Breast epithelium (tissue), 4 donors: ENCODE measurements at regions of chr3 and their contacts with region 1.

Region 1: GRCh38 chr3:139006051-139006716 is at the start of gene PRR23A:
- DNase-seq: no peak
- H3K4me3 ChIP-seq: no peak within 1 kb of the TSS
- H3K27ac ChIP-seq: no peak within 1 kb of the TSS
- H3K4me1 ChIP-seq: no peaks in the 10 kb centered on the region
- H3K27me3 ChIP-seq: no peaks in the 10 kb centered on the region
- CTCF ChIP-seq: no peak
- POLR2A ChIP-seq: no peak
- total RNA-seq, gene PRR23A: not detected

Region 2: DNA sequence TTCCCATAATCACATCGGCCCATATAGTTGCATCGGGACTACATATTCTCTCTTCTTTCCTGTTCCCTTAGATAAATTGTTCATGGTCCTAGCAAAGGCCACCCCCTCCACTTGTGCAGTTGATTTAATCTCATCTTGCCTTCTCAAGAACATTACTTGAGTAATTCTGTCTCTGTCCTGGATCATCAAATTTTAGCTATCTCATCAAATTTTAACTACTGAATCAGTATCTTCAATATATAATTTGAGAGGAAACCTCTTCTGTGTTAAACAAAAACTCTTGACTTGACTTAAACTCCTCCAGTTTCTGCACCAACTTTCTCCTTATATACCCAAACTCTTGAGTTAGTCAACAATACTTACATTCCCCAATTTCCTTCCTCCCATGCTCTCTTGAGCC is 18.8 kb after region 1 on chr3:
- intact Hi-C with region 1: loop called (anchors 1 kb)
- DNase-seq: no peak
- H3K4me3 ChIP-seq: no peak overlapping the region
- H3K27ac ChIP-seq: no peak overlapping the region
- H3K4me1 ChIP-seq: no peaks in the 10 kb centered on the region
- H3K27me3 ChIP-seq: no peaks in the 10 kb centered on the region
- CTCF ChIP-seq: no peak
- POLR2A ChIP-seq: no peak

Region 3: DNA sequence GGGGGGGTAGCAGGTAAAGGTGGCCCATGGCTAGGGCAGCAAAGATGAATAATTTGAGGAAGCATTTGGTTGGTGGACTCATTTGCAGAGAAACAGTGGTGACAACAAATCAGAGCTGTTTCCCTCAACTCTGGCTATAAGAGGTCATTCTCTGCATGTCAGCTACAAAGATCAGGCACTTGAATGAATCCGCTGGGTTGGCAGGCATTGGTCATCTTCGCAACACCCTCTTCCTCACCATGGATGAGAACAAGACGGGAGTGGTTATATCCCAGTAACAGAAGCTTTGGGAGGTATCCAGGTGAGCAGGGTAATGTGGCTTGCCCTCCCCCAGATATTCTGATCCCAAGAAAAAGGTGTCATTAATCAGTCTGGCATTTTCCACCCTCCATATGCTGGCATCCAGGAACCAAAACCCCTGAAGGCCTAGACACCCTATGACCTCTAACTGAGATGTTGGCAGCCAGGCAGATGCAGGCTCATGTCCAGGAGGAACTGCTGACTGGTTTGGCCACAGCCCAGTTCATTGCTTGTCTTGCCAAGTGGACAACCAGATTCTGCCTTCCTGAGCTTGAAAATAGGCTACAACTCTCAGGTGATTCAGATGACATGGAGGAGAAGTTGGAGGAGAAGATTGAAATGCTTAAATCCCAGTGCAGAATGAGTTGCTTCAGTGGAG is 1562.8 kb after region 1 on chr3:
- intact Hi-C with region 1: loop called (anchors 5 kb)
- DNase-seq: peak; percentile 27 to 64
- H3K4me3 ChIP-seq: no peak overlapping the region
- H3K27ac ChIP-seq: no peak overlapping the region
- H3K4me1 ChIP-seq: peaks cover 0 to 7% of the 10 kb centered on the region in 2 donors
- H3K27me3 ChIP-seq: no peaks in the 10 kb centered on the region
- CTCF ChIP-seq: no peak
- POLR2A ChIP-seq: no peak